ENCODE measurements at regions of chr10 and their contacts with region 1.

Region 1: GRCh38 chr10:88386821-88387773 is 196.0 kb downstream of the RNLS start:
- DNase-seq: peak; percentile 50
- ATAC-seq: peak; percentile 77
- H3K4me3 ChIP-seq: peak overlapping the region in 2 of 3 experiments; percentile 18 to 58; a peak in 2 of 6 replicates
- H3K27ac ChIP-seq: peak overlapping the region; percentile 50
- H3K4me1 ChIP-seq: peaks cover 24% of the 10 kb centered on the region
- H3K27me3 ChIP-seq: no peaks in the 10 kb centered on the region
- CTCF ChIP-seq: no peak
- EP300 ChIP-seq: no peak
- POLR2A ChIP-seq: no peak
- RAD21 ChIP-seq: no peak

Region 2: DNA sequence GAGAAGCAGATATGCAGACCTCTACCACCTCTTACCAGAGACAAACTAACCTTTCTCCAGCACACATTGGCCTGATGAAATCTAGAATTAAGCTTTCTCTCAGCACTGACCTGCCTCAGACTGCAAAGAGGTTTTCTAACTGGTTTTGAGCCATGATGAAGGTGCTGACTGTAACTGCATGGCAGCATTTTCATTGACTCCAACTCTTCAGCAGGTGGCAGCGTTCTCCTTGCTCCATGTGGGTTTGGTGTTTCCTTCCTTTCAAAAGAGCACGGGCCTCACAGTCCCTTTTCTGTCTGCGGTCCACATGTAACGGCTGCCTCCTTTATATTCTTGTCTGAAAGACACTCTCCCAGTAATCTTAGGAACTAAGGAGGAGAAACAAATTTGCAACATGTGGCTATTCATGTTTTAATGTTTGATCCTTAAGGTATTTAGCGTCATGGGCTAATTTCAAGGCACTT is 536.3 kb before region 1 on chr10:
- CTCF ChIA-PET with region 1: interaction called, 3 read pairs
- POLR2A ChIA-PET with region 1: no interaction called
- in situ Hi-C with region 1: no loop called
- intact Hi-C with region 1: loop called (anchors 1 kb)
- DNase-seq: peak; percentile 67
- ATAC-seq: peak; percentile 96
- H3K4me3 ChIP-seq: no peak overlapping the region
- H3K27ac ChIP-seq: no peak overlapping the region
- H3K4me1 ChIP-seq: peaks cover 12% of the 10 kb centered on the region
- H3K27me3 ChIP-seq: no peaks in the 10 kb centered on the region
- CTCF ChIP-seq: peak; percentile 83
- EP300 ChIP-seq: no peak
- POLR2A ChIP-seq: no peak
- RAD21 ChIP-seq: peak; percentile 65; the same call in 1 of the 2 replicates

Region 3: DNA sequence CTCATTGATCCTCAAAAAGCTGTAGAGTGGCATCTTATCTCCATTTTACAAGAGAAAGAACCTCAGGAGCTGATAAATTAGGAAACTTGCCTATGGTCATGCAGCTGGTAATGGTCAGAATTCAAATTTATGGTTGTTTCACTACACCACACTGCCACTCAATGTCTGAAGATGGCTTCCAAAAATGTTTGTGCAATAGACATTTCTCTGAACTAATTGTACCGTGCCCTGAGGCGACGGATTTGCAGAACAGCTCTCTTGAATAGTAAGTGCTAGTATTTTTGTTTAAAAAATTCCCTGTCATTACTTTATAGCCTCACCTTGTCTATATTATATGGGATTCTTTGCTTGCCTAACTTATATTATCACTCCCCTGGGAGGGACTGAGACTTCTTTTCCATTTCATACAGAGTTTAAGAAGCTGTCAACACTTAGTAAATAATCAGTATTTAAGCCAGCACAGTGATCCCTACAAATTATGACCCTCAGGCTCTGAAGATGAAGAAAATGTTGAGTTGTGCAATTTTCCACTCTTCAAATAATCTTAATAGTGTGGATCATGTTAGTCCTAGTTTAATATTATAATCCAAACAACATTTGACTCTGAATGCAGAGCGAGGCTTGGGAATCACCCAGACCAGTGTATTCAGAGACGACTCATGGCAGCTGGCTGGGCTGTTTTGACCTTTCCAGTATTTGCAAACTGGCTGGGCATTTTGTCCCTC is 177.1 kb before region 1 on chr10:
- CTCF ChIA-PET with region 1: no interaction called
- POLR2A ChIA-PET with region 1: no interaction called
- in situ Hi-C with region 1: no loop called
- intact Hi-C with region 1: loop called (anchors 10 kb)
- DNase-seq: no peak
- ATAC-seq: no peak
- H3K4me3 ChIP-seq: no peak overlapping the region
- H3K27ac ChIP-seq: no peak overlapping the region
- H3K4me1 ChIP-seq: no peaks in the 10 kb centered on the region
- H3K27me3 ChIP-seq: no peaks in the 10 kb centered on the region
- CTCF ChIP-seq: no peak
- EP300 ChIP-seq: no peak
- POLR2A ChIP-seq: no peak
- RAD21 ChIP-seq: no peak

Region 4: DNA sequence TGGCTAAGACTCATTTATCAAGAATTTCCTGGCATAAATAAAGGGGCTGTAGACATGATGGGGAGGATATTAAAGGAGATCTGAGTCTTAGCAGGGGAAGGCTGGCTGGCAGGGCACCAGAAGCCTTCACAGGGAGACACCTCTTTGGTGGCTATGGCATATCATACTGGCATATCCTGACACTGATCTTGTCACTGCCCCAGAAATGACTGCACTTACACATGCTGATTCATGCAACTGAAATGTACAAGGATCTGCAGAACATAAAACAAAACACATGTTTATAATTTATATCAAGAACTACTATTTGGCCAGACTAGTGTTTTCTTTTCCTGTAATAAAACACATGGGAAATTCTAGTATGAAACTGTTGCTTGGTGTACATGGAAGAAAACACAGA is 367.2 kb after region 1 on chr10:
- CTCF ChIA-PET with region 1: no interaction called
- POLR2A ChIA-PET with region 1: no interaction called
- in situ Hi-C with region 1: no loop called
- intact Hi-C with region 1: no loop called
- DNase-seq: no peak
- ATAC-seq: no peak
- H3K4me3 ChIP-seq: no peak overlapping the region
- H3K27ac ChIP-seq: no peak overlapping the region
- H3K4me1 ChIP-seq: no peaks in the 10 kb centered on the region
- H3K27me3 ChIP-seq: no peaks in the 10 kb centered on the region
- CTCF ChIP-seq: no peak
- EP300 ChIP-seq: no peak
- POLR2A ChIP-seq: no peak
- RAD21 ChIP-seq: no peak

Measured in HepG2 (cell line).